Prostate gland (tissue), 2 donors: ENCODE measurements at regions of chr7 and their contacts with region 1.

Region 1: GRCh38 chr7:91089382-91089963 is 174.8 kb upstream of the FZD1 start:
- DNase-seq: no peak
- H3K4me3 ChIP-seq: no peak overlapping the region
- H3K27ac ChIP-seq: no peak overlapping the region
- H3K4me1 ChIP-seq: no peaks in the 10 kb centered on the region
- H3K27me3 ChIP-seq: no peaks in the 10 kb centered on the region
- CTCF ChIP-seq: peak; percentile 55 to 69 (median 67)
- POLR2A ChIP-seq: no peak

Region 2: DNA sequence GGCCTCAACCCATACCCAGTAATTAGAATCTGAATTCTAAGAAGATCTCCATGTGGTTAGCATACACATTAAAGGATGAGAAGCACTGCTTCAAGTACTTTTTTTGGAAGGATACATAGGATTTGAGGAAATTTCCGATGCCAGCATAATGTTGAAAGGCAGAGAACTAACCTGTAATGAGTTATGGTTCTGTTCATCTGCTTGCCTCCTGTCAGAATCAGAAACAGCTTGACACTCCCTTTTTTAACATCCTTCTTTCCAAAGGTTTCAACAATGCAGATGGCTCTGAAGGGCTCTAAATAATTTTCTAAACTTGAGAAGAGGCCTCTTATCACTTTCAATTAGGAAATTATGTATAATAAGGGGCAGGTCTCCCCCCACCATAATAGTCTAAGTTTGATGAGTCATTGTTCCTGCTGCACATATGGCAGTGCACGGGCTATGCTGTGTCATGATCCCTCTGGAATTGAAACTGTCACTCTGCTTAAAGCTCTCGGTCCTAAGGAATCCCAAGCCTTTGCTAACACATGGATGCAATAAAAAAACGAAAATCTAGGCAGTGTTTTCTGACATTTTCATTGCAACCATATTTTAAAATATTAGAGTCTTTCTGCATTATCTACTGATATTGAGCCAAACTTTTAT is 116.4 kb before region 1 on chr7:
- intact Hi-C with region 1: no loop called
- DNase-seq: no peak
- H3K4me3 ChIP-seq: no peak overlapping the region
- H3K27ac ChIP-seq: no peak overlapping the region
- H3K4me1 ChIP-seq: no peaks in the 10 kb centered on the region
- H3K27me3 ChIP-seq: no peaks in the 10 kb centered on the region
- CTCF ChIP-seq: no peak
- POLR2A ChIP-seq: no peak

Region 3: DNA sequence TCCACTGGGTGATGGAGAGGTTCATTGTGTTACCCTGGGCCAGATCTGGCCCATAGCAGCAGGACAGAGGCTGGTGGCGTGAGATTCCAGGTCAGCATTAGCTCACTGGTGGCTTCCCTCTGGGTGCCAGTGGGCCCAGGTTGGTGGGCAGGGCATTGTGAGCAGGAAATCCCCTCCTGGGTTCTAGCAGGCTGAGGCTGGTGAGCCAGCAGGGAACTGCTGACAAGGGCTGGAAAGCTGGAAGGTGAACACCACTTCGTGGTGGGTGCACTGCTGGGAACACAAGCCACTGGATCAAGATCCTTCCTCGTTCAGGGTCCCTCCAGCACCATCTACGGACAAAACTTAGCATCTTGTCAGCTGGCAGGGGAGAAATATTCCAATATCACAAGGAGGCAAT is 84.4 kb before region 1 on chr7:
- intact Hi-C with region 1: no loop called
- DNase-seq: no peak
- H3K4me3 ChIP-seq: no peak overlapping the region
- H3K27ac ChIP-seq: no peak overlapping the region
- H3K4me1 ChIP-seq: no peaks in the 10 kb centered on the region
- H3K27me3 ChIP-seq: no peaks in the 10 kb centered on the region
- CTCF ChIP-seq: no peak
- POLR2A ChIP-seq: no peak

Region 4: DNA sequence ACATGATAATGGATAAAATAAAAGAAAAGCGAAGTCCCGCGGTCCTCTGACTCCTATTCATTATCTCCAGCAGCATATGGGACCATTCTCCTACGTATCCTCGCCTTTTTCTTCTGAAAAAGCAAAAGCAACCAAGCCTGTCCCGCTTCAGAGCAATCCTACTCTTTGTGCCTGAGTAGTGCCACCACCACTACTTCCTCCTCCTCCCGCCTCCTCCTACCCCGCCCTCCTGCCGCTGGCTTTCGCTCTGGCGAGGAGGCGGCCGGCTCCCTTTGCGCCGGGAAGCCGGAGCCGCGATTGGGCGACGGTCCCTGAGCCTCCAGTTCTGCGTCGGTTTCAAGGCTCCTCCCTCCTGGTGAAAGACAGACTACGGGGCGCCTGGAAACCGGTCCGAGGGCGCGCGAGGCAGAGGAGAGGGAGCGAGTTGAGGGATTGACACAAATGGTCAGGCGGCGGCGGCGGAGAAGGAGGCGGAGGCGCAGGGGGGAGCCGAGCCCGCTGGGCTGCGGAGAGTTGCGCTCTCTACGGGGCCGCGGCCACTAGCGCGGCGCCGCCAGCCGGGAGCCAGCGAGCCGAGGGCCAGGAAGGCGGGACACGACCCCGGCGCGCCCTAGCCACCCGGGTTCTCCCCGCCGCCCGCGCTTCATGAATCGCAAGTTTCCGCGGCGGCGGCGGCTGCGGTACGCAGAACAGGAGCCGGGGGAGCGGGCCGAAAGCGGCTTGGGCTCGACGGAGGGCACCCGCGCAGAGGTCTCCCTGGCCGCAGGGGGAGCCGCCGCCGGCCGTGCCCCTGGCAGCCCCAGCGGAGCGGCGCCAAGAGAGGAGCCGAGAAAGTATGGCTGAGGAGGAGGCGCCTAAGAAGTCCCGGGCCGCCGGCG is 174.8 kb after region 1 on chr7 and contains the start of gene FZD1:
- intact Hi-C with region 1: loop called (anchors 10 kb)
- DNase-seq: peak; percentile 98
- H3K4me3 ChIP-seq: peak within 1 kb of the TSS; percentile 81 to 94
- H3K27ac ChIP-seq: peak within 1 kb of the TSS; percentile 96 to 97
- H3K4me1 ChIP-seq: peaks cover 3% of the 10 kb centered on the region
- H3K27me3 ChIP-seq: no peaks in the 10 kb centered on the region
- CTCF ChIP-seq: peak in 2 of 4 experiments; percentile 7 to 13
- POLR2A ChIP-seq: peak; percentile 94
- total RNA-seq, gene FZD1: 26.6 to 56.9 TPM

Region 5: DNA sequence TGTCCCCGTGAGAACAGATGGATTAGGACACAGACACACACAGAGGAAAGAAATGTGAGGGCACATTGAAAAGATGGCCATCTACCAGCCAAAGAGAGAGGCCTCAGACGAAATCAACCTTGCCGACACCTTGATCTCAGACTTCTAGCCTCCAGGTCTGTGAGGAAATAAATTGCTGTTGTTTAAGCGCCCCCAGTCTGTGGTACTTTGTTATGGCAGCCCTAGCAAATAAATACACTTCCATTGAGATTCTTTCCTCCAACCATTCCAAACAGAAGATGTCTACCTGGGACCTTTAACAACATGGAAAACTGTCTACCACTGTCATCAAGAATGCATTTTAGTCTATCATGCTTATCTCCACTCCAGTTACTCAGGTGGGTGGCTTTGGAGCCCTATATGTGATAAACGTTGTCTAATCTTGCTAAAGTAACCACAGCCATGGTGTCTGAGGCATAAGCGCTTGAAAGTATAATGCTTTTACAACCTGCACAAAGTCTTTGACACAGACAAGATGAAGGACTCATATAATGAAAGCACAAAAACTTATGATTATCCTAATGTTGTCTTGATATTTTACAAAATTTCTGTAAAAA is 546.8 kb after region 1 on chr7:
- intact Hi-C with region 1: loop called (anchors 10 kb)
- DNase-seq: no peak
- H3K4me3 ChIP-seq: no peak overlapping the region
- H3K27ac ChIP-seq: no peak overlapping the region
- H3K4me1 ChIP-seq: peaks cover 9% of the 10 kb centered on the region
- H3K27me3 ChIP-seq: no peaks in the 10 kb centered on the region
- CTCF ChIP-seq: peak in 3 of 4 experiments; percentile 29 to 59 (median 58)
- POLR2A ChIP-seq: no peak

Region 6: GRCh38 chr7:91784463-91784862 is 695.0 kb after region 1 on chr7:
- intact Hi-C with region 1: loop called (anchors 5 kb)
- DNase-seq: peak; percentile 7
- H3K4me3 ChIP-seq: no peak overlapping the region
- H3K27ac ChIP-seq: no peak overlapping the region
- H3K4me1 ChIP-seq: no peaks in the 10 kb centered on the region
- H3K27me3 ChIP-seq: no peaks in the 10 kb centered on the region
- CTCF ChIP-seq: peak in 3 of 4 experiments; percentile 48 to 73 (median 60)
- POLR2A ChIP-seq: no peak